ENCODE measurements at regions of chr3 and their contacts with region 1.

Region 1: DNA sequence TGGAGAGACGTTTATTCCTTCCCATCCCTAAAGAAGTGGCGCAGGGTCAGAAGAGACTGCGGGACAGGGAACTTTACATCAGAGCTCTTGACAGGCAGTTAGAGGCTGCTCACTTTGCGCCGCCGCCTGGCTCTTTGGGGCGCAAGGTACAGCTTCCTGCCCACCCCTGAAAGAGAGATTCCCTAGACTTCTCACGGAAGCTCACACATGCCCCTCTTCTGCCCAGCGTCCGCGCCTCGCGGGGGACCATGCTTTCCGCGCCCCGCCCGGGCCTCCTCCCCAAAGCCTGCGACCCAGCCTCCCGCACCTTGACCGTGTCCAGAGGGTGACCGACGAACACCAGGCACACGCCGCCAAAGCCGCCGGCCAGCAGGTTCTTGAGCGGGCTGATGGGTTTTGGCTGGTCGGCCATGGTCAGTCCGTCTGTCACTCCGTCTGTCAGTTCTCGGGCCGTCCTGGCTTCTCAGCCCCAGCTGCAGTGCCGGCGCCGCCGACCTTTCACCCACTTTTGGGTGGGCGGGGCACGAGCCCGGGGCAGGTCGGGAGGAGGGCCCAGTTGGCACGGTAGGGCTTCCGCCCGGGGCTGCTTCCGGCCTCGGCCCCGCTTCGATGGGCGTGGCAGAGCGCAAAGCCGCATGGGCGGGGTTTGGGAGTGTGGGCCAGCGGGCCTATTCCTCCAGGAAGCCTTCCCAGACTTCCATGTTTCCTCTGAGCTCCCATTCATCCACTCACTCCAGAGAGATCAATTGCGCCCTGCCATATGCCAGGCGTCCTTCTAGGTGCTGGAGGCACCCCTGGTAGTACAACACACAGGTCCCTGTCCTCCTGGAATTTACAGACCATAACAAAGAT is at the start of gene SLC25A20:
- DNase-seq: peak; percentile 85 to 93
- ATAC-seq: peak; percentile 88 to 95 (median 88)
- H3K4me3 ChIP-seq: peak within 1 kb of the TSS; percentile 91
- H3K4me3 Mint-ChIP-seq: peak within 1 kb of the TSS; percentile 95
- H3K27ac ChIP-seq: peak within 1 kb of the TSS; percentile 88
- H3K27ac Mint-ChIP-seq: peak within 1 kb of the TSS; percentile 86 to 88
- H3K4me1 ChIP-seq: peaks cover 44% of the 10 kb centered on the region
- H3K4me1 Mint-ChIP-seq: peaks cover 43 to 51% of the 10 kb centered on the region in 2 donors
- H3K27me3 ChIP-seq: no peaks in the 10 kb centered on the region
- H3K27me3 Mint-ChIP-seq: no peaks in the 10 kb centered on the region
- CTCF ChIP-seq: no peak
- total RNA-seq, gene SLC25A20: 29.5 to 64.0 (median 48.3) TPM

Region 2: GRCh38 chr3:48811524-48811923 is 87.1 kb before region 1 on chr3:
- intact Hi-C with region 1: loop called (anchors 1 kb)
- DNase-seq: no peak
- ATAC-seq: no peak
- H3K4me3 ChIP-seq: no peak overlapping the region
- H3K4me3 Mint-ChIP-seq: peak overlapping the region; percentile 65
- H3K27ac ChIP-seq: peak overlapping the region; percentile 83
- H3K27ac Mint-ChIP-seq: peak overlapping the region; percentile 90 to 95
- H3K4me1 ChIP-seq: peaks cover 20% of the 10 kb centered on the region
- H3K4me1 Mint-ChIP-seq: peaks cover 28 to 31% of the 10 kb centered on the region in 2 donors
- H3K27me3 ChIP-seq: no peaks in the 10 kb centered on the region
- H3K27me3 Mint-ChIP-seq: no peaks in the 10 kb centered on the region
- CTCF ChIP-seq: no peak

Region 3: GRCh38 chr3:48847504-48848423 is 50.8 kb before region 1 on chr3 and contains the start of gene PRKAR2A:
- intact Hi-C with region 1: loop called (anchors 5 kb)
- DNase-seq: peak; percentile 88 to 92
- ATAC-seq: peak; percentile 89 to 95 (median 89)
- H3K4me3 ChIP-seq: peak within 1 kb of the TSS; percentile 86
- H3K4me3 Mint-ChIP-seq: peak within 1 kb of the TSS; percentile 91
- H3K27ac ChIP-seq: peak within 1 kb of the TSS; percentile 79
- H3K27ac Mint-ChIP-seq: peak within 1 kb of the TSS; percentile 98
- H3K4me1 ChIP-seq: peaks cover 27% of the 10 kb centered on the region
- H3K4me1 Mint-ChIP-seq: peaks cover 23 to 29% of the 10 kb centered on the region in 2 donors
- H3K27me3 ChIP-seq: no peaks in the 10 kb centered on the region
- H3K27me3 Mint-ChIP-seq: no peaks in the 10 kb centered on the region
- CTCF ChIP-seq: no peak
- total RNA-seq, gene PRKAR2A: 40.5 to 43.5 (median 42.7) TPM

Region 4: DNA sequence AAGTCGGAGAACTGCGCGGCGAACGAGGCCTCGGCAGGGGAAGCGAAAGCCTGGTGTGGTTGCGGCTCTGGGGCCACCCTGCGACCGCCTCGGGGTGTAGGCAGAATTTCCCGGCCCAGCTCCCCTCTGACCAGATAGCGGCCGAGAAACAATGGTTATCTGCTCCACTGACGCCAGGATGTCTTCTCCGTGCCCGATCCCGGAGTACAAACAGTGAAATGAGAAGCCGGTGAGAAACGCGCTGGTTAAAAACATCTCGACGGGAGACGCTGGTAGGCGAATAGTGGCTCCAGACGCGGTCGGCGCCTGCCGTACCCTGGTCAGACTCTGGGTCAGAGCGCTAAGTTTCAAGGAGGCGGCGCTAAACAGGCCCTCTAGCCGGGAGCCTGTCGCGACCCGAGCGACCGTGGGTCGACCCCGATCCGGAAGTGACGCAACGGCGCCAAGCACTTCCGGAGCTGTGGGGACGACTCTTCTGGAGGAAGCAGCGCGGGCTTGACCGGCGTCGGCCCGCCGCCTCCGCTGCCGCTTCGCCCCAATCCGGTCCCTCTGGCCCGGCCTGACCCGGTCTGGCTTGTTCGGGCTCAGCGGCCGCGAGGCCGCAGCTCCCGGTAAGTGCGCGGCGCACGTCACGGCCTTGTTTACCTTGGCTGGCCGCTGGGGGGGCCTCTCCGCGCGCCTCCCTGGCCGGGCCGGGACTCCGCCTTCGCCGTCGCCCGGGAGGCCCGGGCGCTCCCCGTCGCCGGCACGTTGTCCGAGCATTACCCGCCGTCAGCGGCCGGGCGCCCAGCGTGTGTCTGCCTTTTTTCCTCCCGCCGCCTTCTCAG is 20.0 kb after region 1 on chr3 and contains the start of gene ARIH2:
- intact Hi-C with region 1: loop called (anchors 1 kb)
- DNase-seq: peak; percentile 90 to 96
- ATAC-seq: peak; percentile 71 to 90 (median 78)
- H3K4me3 ChIP-seq: peak within 1 kb of the TSS; percentile 69
- H3K4me3 Mint-ChIP-seq: peak within 1 kb of the TSS; percentile 93
- H3K27ac ChIP-seq: peak within 1 kb of the TSS; percentile 93
- H3K27ac Mint-ChIP-seq: peak within 1 kb of the TSS; percentile 94 to 99
- H3K4me1 ChIP-seq: peaks cover 32% of the 10 kb centered on the region
- H3K4me1 Mint-ChIP-seq: peaks cover 15 to 20% of the 10 kb centered on the region in 2 donors
- H3K27me3 ChIP-seq: no peaks in the 10 kb centered on the region
- H3K27me3 Mint-ChIP-seq: no peaks in the 10 kb centered on the region
- CTCF ChIP-seq: peak; percentile 21
- total RNA-seq, gene ARIH2: 239 to 291 (median 243) TPM

Region 5: GRCh38 chr3:48926425-48927392 is 28.1 kb after region 1 on chr3:
- intact Hi-C with region 1: loop called (anchors 2 kb)
- DNase-seq: no peak
- ATAC-seq: no peak
- H3K4me3 ChIP-seq: no peak overlapping the region
- H3K4me3 Mint-ChIP-seq: peak overlapping the region; percentile 74
- H3K27ac ChIP-seq: no peak overlapping the region
- H3K27ac Mint-ChIP-seq: peak overlapping the region; percentile 71 to 79
- H3K4me1 ChIP-seq: peaks cover 38% of the 10 kb centered on the region
- H3K4me1 Mint-ChIP-seq: peaks cover 57 to 60% of the 10 kb centered on the region in 2 donors
- H3K27me3 ChIP-seq: no peaks in the 10 kb centered on the region
- H3K27me3 Mint-ChIP-seq: no peaks in the 10 kb centered on the region
- CTCF ChIP-seq: no peak